T-cell (primary cell): ENCODE measurements at regions of chr6 and their contacts with region 1.

Region 1: DNA sequence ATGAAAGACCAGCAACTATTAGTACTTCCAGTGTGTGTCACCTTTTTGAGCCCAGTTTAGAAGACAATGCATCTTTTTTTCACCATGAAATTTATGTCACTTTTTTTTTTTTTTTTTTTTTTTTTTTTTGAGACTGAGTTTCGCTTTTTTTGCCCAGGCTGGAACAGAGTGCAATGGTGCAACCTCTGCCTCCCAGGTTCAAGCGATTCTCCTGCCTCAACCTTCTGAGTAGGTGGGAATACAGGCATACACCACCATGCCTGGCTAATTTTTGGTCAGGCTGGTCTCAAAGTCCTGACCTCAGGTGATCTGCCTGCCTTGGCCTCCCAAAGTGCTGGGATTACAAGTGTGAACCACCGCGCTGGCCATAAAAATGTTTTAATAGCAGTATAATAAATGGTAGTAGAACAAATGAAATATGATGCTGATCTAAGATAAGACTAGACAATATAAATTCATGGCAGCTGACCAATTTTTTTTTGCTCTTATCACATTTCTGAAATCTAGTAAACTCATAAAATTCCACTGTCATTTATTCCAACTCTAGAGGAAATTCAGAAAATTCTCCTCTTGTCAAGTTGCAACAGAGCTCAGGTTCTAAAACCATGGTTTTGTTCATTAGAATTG is 21.3 kb downstream of the NHSL1 start:
- DNase-seq: no peak
- ATAC-seq: no peak
- H3K4me3 ChIP-seq: no peak overlapping the region
- H3K4me3 Mint-ChIP-seq: no peak overlapping the region
- H3K27ac ChIP-seq: no peak overlapping the region
- H3K27ac Mint-ChIP-seq: no peak overlapping the region
- H3K4me1 ChIP-seq: no peaks in the 10 kb centered on the region
- H3K4me1 Mint-ChIP-seq: no peaks in the 10 kb centered on the region
- H3K27me3 ChIP-seq: peaks cover 0 to 3% of the 10 kb centered on the region in 2 experiments
- H3K27me3 Mint-ChIP-seq: peaks cover 0 to 2% of the 10 kb centered on the region in 2 donors

Region 2: GRCh38 chr6:138450445-138450844 is 27.6 kb before region 1 on chr6:
- CTCF ChIA-PET with region 1: interaction called, 3 to 12 read pairs
- POLR2A ChIA-PET with region 1: interaction called in 1 of 2 experiments, 3 read pairs
- DNase-seq: no peak
- ATAC-seq: no peak
- H3K4me3 ChIP-seq: no peak overlapping the region
- H3K4me3 Mint-ChIP-seq: no peak overlapping the region
- H3K27ac ChIP-seq: no peak overlapping the region
- H3K27ac Mint-ChIP-seq: no peak overlapping the region
- H3K4me1 ChIP-seq: peaks cover 3 to 7% of the 10 kb centered on the region in 2 experiments
- H3K4me1 Mint-ChIP-seq: peaks cover 9 to 17% (median 11%) of the 10 kb centered on the region in 3 donors
- H3K27me3 ChIP-seq: no peaks in the 10 kb centered on the region
- H3K27me3 Mint-ChIP-seq: no peaks in the 10 kb centered on the region

Region 3: GRCh38 chr6:138499303-138500018 is 21.4 kb after region 1 on chr6 and contains the start of gene NHSL1:
- CTCF ChIA-PET with region 1: interaction called, 3 to 11 read pairs
- POLR2A ChIA-PET with region 1: no interaction called
- DNase-seq: no peak
- ATAC-seq: no peak
- H3K4me3 ChIP-seq: no peak within 1 kb of the TSS
- H3K4me3 Mint-ChIP-seq: no peak within 1 kb of the TSS
- H3K27ac ChIP-seq: no peak within 1 kb of the TSS
- H3K27ac Mint-ChIP-seq: no peak within 1 kb of the TSS
- H3K4me1 ChIP-seq: no peaks in the 10 kb centered on the region
- H3K4me1 Mint-ChIP-seq: peaks cover 0 to 8% (median 4%) of the 10 kb centered on the region in 3 donors
- H3K27me3 ChIP-seq: no peaks in the 10 kb centered on the region
- H3K27me3 Mint-ChIP-seq: peaks cover 6 to 7% of the 10 kb centered on the region in 2 donors
- total RNA-seq, gene NHSL1: 0.08 to 0.64 (median 0.46) TPM